ENCODE measurements at regions of chr20 and their contacts with region 1.

Region 1: GRCh38 chr20:46013826-46014516 is 5.3 kb downstream of the MMP9 start:
- DNase-seq: no peak
- H3K4me3 ChIP-seq: no peak overlapping the region
- CTCF ChIP-seq: peak; percentile 44

Region 2: DNA sequence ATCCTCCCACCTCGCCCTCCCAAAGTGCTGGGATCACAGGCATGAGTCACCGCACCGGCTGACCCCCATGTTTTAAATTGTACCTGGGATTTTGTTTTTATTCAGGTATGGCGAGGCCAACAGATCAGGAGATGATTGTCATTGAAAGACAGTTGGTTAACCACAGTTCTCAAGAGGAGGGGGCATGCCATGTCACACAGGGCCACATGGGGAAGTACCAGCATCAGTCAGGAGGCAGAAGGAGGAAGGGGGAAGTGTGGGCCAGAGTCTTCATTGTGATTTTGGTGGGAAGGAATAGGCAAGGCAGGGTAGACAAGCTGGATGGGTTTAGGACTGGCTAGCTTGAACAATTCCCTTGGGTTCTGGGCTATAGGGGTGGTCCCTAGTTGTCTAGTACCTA is 15.2 kb before region 1 on chr20:
- CTCF ChIA-PET with region 1: interaction called, 25 read pairs
- POLR2A ChIA-PET with region 1: no interaction called
- DNase-seq: no peak
- H3K4me3 ChIP-seq: no peak overlapping the region
- CTCF ChIP-seq: no peak

Region 3: GRCh38 chr20:46065006-46065405 is 51.0 kb after region 1 on chr20:
- CTCF ChIA-PET with region 1: interaction called, 14 read pairs
- POLR2A ChIA-PET with region 1: no interaction called
- DNase-seq: no peak
- H3K4me3 ChIP-seq: no peak overlapping the region
- CTCF ChIP-seq: no peak

Region 4: GRCh38 chr20:46139908-46140482 is 126.0 kb after region 1 on chr20:
- CTCF ChIA-PET with region 1: no interaction called
- POLR2A ChIA-PET with region 1: no interaction called
- DNase-seq: no peak
- H3K4me3 ChIP-seq: no peak overlapping the region
- CTCF ChIP-seq: no peak

Region 5: GRCh38 chr20:46174469-46175128 is 160.6 kb after region 1 on chr20:
- CTCF ChIA-PET with region 1: interaction called, 11 read pairs
- POLR2A ChIA-PET with region 1: no interaction called
- DNase-seq: no peak
- H3K4me3 ChIP-seq: no peak overlapping the region
- CTCF ChIP-seq: peak; percentile 79